HepG2 (cell line): ENCODE measurements at regions of chr16 and their contacts with region 1.

Region 1: GRCh38 chr16:85275533-85276249 is 163.4 kb upstream of the CIBAR2 start:
- DNase-seq: peak; percentile 60
- ATAC-seq: peak; percentile 88
- H3K4me3 ChIP-seq: no peak overlapping the region
- H3K27ac ChIP-seq: no peak overlapping the region
- H3K4me1 ChIP-seq: peaks cover 6% of the 10 kb centered on the region; the same call in 1 of the 2 replicates
- H3K27me3 ChIP-seq: peaks cover 3 to 4% of the 10 kb centered on the region in 2 experiments; a peak in 2 of 5 replicates
- CTCF ChIP-seq: peak; percentile 100
- EP300 ChIP-seq: no peak
- POLR2A ChIP-seq: no peak
- RAD21 ChIP-seq: peak; percentile 99

Region 2: DNA sequence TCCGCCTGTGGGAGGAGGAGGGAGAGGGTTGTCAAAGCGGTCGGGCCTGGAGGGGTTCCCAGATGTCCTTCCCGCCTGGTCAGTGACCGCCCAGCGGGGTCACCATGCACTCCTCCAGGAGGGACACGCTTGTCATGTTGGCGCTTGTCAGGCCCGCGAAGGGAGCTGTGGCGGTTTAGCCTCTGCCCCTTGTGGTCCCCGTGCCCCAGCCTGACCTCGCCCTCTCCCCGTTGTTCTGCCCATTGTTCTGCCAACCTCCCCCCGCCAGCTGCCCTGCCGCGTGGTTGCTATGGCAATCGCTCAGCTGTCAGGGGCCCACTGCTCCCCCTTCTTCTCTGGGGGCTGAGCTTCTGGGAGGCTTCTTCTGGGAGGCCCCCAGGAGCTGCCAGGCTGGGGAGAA is 17.1 kb before region 1 on chr16:
- CTCF ChIA-PET with region 1: no interaction called
- POLR2A ChIA-PET with region 1: no interaction called
- in situ Hi-C with region 1: no loop called
- intact Hi-C with region 1: no loop called
- DNase-seq: no peak
- ATAC-seq: no peak
- H3K4me3 ChIP-seq: no peak overlapping the region
- H3K27ac ChIP-seq: no peak overlapping the region
- H3K4me1 ChIP-seq: peaks cover 1% of the 10 kb centered on the region
- H3K27me3 ChIP-seq: 0 out of 5 replicates have a peak, but pooled peaks cover 0 to 1% of the 10 kb centered on the region in 2 experiments
- CTCF ChIP-seq: no peak
- EP300 ChIP-seq: no peak
- POLR2A ChIP-seq: no peak
- RAD21 ChIP-seq: no peak

Region 3: DNA sequence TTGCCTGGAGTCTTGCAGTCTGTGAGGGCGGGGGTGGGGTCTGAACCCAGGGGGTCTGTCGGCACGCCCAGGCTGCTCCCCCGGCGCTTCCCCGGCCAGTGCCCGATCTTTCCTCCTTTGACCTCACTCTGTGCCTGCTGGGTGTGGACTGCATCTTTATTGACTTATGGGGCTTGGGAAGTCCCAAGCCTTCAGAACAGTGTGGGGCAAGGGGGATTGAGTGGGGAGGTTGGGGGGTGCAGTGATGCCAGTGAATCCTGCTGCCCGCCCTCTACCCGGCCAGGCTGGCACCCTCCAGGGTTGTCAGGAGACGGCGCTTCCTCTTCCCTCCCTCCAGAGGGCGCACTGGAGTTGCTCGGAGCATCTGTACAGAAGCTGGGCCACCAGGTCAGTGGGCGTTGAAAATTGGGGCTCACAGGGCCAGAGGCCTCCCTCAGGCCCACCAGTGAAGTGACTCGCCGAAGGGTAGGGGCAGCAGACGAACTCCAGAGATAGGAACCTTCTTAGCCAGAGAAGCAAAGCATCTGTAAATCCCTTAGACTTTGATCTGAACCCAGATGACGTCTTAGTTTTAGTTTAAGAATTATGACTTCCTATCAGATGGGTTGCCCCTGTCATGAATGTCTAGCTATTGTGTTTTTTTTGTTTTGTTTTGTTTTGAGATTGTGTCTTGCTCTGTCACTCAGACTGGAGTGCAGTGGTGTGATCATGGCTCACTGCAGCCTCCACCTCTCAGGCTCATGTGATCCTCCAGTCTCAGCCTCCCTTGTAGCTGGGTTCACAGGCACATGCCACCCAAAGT is 21.4 kb after region 1 on chr16:
- CTCF ChIA-PET with region 1: interaction called, 13 read pairs
- POLR2A ChIA-PET with region 1: no interaction called
- in situ Hi-C with region 1: no loop called
- intact Hi-C with region 1: no loop called
- DNase-seq: peak; percentile 52
- ATAC-seq: peak; percentile 87
- H3K4me3 ChIP-seq: no peak overlapping the region
- H3K27ac ChIP-seq: no peak overlapping the region
- H3K4me1 ChIP-seq: peaks cover 64% of the 10 kb centered on the region
- H3K27me3 ChIP-seq: no peaks in the 10 kb centered on the region; a peak in 1 of 5 replicates
- CTCF ChIP-seq: peak; percentile 86
- EP300 ChIP-seq: no peak
- POLR2A ChIP-seq: no peak
- RAD21 ChIP-seq: peak; percentile 72

Region 4: GRCh38 chr16:85330694-85331188 is 55.0 kb after region 1 on chr16:
- CTCF ChIA-PET with region 1: interaction called, 20 read pairs
- POLR2A ChIA-PET with region 1: no interaction called
- in situ Hi-C with region 1: no loop called
- intact Hi-C with region 1: loop called (anchors 2 kb)
- DNase-seq: peak; percentile 72
- ATAC-seq: peak; percentile 69
- H3K4me3 ChIP-seq: no peak overlapping the region
- H3K27ac ChIP-seq: no peak overlapping the region
- H3K4me1 ChIP-seq: peaks cover 45% of the 10 kb centered on the region
- H3K27me3 ChIP-seq: peaks cover 5 to 31% of the 10 kb centered on the region in 2 experiments
- CTCF ChIP-seq: peak; percentile 68
- EP300 ChIP-seq: no peak
- POLR2A ChIP-seq: no peak
- RAD21 ChIP-seq: peak; percentile 60